ENCODE measurements at regions of chr11 and their contacts with region 1.

Region 1: GRCh38 chr11:88337181-88337986 is at the start of gene CTSC:
- DNase-seq: peak; percentile 87
- ATAC-seq: peak; percentile 90
- H3K4me3 ChIP-seq: peak within 1 kb of the TSS; percentile 96
- H3K27ac ChIP-seq: peak within 1 kb of the TSS; percentile 98
- H3K4me1 ChIP-seq: peaks cover 2% of the 10 kb centered on the region
- H3K27me3 ChIP-seq: no peaks in the 10 kb centered on the region
- CTCF ChIP-seq: peak; percentile 23; the same call in 1 of the 2 replicates
- POLR2A ChIP-seq: peak; percentile 83
- RAD21 ChIP-seq: peak; percentile 11
- total RNA-seq, gene CTSC: 178 and 208 TPM in 2 replicates

Region 2: GRCh38 chr11:88363566-88364169 is 26.3 kb after region 1 on chr11:
- CTCF ChIA-PET with region 1: no interaction called
- POLR2A ChIA-PET with region 1: interaction called, 13 read pairs
- dilution Hi-C with region 1: no loop called
- in situ Hi-C with region 1: no loop called
- intact Hi-C with region 1: no loop called
- DNase-seq: peak; percentile 34
- ATAC-seq: peak; percentile 56
- H3K4me3 ChIP-seq: no peak overlapping the region
- H3K27ac ChIP-seq: no peak overlapping the region
- H3K4me1 ChIP-seq: peaks cover 6% of the 10 kb centered on the region
- H3K27me3 ChIP-seq: no peaks in the 10 kb centered on the region
- CTCF ChIP-seq: no peak
- POLR2A ChIP-seq: no peak
- RAD21 ChIP-seq: no peak

Region 3: GRCh38 chr11:88484873-88485621 is 147.7 kb after region 1 on chr11:
- CTCF ChIA-PET with region 1: interaction called, 4 read pairs
- POLR2A ChIA-PET with region 1: interaction called, 3 read pairs
- dilution Hi-C with region 1: no loop called
- in situ Hi-C with region 1: no loop called
- intact Hi-C with region 1: loop called (anchors 2 kb)
- DNase-seq: peak; percentile 23
- ATAC-seq: no peak; the same call in 1 of the 2 replicates
- H3K4me3 ChIP-seq: no peak overlapping the region
- H3K27ac ChIP-seq: no peak overlapping the region
- H3K4me1 ChIP-seq: peaks cover 5% of the 10 kb centered on the region; the same call in 1 of the 2 replicates
- H3K27me3 ChIP-seq: no peaks in the 10 kb centered on the region
- CTCF ChIP-seq: peak; percentile 49
- POLR2A ChIP-seq: no peak
- RAD21 ChIP-seq: peak; percentile 27; the same call in 1 of the 2 replicates

Region 4: DNA sequence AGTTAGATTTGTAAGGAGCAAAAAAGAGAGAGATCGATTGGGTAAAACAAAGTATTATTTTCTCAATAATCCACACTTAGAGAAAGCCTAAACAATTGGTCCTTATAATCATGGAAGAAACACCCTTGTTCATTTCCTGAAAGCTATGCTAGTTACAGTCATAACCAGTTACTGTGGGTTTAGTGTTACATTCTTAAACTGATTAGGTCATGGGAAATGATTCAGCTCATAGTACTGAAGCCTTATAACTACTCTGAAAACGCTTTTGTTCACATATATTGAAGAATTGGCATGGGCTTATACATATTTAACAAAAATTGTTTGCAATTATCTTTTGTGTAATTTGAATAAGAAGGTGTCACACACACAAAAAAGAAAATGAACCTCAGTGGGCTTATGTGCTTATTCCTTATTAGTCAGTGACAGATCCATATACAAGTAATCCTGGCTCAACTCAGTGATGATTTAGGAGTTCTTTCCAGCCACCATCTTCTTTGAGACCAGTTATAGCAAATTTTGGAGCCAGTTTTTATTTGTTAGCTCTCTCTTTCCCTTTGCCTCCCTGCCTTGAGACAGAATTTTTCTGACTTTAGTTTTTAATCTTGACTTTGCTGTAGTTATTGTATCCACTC is 198.6 kb after region 1 on chr11:
- CTCF ChIA-PET with region 1: no interaction called
- POLR2A ChIA-PET with region 1: interaction called, 6 read pairs
- dilution Hi-C with region 1: no loop called
- in situ Hi-C with region 1: no loop called
- intact Hi-C with region 1: loop called (anchors 2 kb)
- DNase-seq: peak; percentile 92
- ATAC-seq: peak; percentile 97
- H3K4me3 ChIP-seq: no peak overlapping the region
- H3K27ac ChIP-seq: peak overlapping the region; percentile 97
- H3K4me1 ChIP-seq: peaks cover 8% of the 10 kb centered on the region
- H3K27me3 ChIP-seq: no peaks in the 10 kb centered on the region
- CTCF ChIP-seq: no peak
- POLR2A ChIP-seq: no peak
- RAD21 ChIP-seq: no peak

Region 5: GRCh38 chr11:88603091-88603867 is 265.9 kb after region 1 on chr11:
- CTCF ChIA-PET with region 1: no interaction called
- POLR2A ChIA-PET with region 1: no interaction called
- dilution Hi-C with region 1: no loop called
- in situ Hi-C with region 1: no loop called
- intact Hi-C with region 1: no loop called
- DNase-seq: peak; percentile 13
- ATAC-seq: no peak
- H3K4me3 ChIP-seq: no peak overlapping the region
- H3K27ac ChIP-seq: no peak overlapping the region
- H3K4me1 ChIP-seq: peaks cover 2% of the 10 kb centered on the region; the same call in 1 of the 2 replicates
- H3K27me3 ChIP-seq: no peaks in the 10 kb centered on the region
- CTCF ChIP-seq: no peak
- POLR2A ChIP-seq: no peak
- RAD21 ChIP-seq: no peak